CD8-positive, alpha-beta memory T cell (primary cell): ENCODE measurements at regions of chr2 and their contacts with region 1.

Region 1: GRCh38 chr2:195656859-195657633 is at the start of gene SLC39A10:
- DNase-seq: peak; percentile 92 to 98 (median 97)
- H3K4me3 ChIP-seq: peak within 1 kb of the TSS; percentile 81
- H3K4me3 Mint-ChIP-seq: peak within 1 kb of the TSS; percentile 95 to 100 (median 99)
- H3K27ac ChIP-seq: peak within 1 kb of the TSS; percentile 98
- H3K27ac Mint-ChIP-seq: peak within 1 kb of the TSS; percentile 96 to 100 (median 99)
- H3K4me1 ChIP-seq: peaks cover 17% of the 10 kb centered on the region
- H3K4me1 Mint-ChIP-seq: peaks cover 38 to 45% (median 43%) of the 10 kb centered on the region in 3 donors
- H3K27me3 ChIP-seq: no peaks in the 10 kb centered on the region
- H3K27me3 Mint-ChIP-seq: peaks cover 0 to 9% of the 10 kb centered on the region in 2 donors
- total RNA-seq, gene SLC39A10: 22.2 to 23.6 TPM

Region 2: GRCh38 chr2:195488567-195488966 is 168.5 kb before region 1 on chr2:
- CTCF ChIA-PET with region 1: interaction called, 24 read pairs
- POLR2A ChIA-PET with region 1: no interaction called
- DNase-seq: no peak
- H3K4me3 ChIP-seq: no peak overlapping the region
- H3K4me3 Mint-ChIP-seq: no peak overlapping the region
- H3K27ac ChIP-seq: no peak overlapping the region
- H3K27ac Mint-ChIP-seq: no peak overlapping the region
- H3K4me1 ChIP-seq: peaks cover 13% of the 10 kb centered on the region
- H3K4me1 Mint-ChIP-seq: peaks cover 18 to 35% (median 20%) of the 10 kb centered on the region in 3 donors
- H3K27me3 ChIP-seq: no peaks in the 10 kb centered on the region
- H3K27me3 Mint-ChIP-seq: peaks cover 0 to 1% of the 10 kb centered on the region in 2 donors

Region 3: DNA sequence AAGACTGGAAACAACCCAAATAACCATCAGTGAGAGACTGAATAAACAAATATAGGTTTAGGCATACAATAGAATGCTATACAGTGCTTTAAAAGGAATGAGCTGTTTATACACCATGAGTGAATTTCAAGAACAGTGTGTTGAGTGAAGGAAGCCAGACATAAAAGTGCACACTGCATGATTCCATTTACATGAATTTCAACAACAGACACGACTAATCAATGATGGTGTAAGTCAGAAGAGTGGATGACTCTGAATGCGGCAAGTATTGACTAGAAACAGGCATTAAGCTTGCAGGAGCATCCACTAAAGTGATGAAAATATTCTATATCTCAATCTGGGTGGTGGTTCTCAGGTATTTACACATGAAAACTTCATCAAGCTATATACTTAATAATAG is 142.7 kb before region 1 on chr2:
- CTCF ChIA-PET with region 1: interaction called, 11 read pairs
- POLR2A ChIA-PET with region 1: no interaction called
- DNase-seq: no peak
- H3K4me3 ChIP-seq: no peak overlapping the region
- H3K4me3 Mint-ChIP-seq: no peak overlapping the region
- H3K27ac ChIP-seq: no peak overlapping the region
- H3K27ac Mint-ChIP-seq: no peak overlapping the region
- H3K4me1 ChIP-seq: no peaks in the 10 kb centered on the region
- H3K4me1 Mint-ChIP-seq: peaks cover 3 to 18% (median 8%) of the 10 kb centered on the region in 3 donors
- H3K27me3 ChIP-seq: no peaks in the 10 kb centered on the region
- H3K27me3 Mint-ChIP-seq: no peaks in the 10 kb centered on the region

Region 4: DNA sequence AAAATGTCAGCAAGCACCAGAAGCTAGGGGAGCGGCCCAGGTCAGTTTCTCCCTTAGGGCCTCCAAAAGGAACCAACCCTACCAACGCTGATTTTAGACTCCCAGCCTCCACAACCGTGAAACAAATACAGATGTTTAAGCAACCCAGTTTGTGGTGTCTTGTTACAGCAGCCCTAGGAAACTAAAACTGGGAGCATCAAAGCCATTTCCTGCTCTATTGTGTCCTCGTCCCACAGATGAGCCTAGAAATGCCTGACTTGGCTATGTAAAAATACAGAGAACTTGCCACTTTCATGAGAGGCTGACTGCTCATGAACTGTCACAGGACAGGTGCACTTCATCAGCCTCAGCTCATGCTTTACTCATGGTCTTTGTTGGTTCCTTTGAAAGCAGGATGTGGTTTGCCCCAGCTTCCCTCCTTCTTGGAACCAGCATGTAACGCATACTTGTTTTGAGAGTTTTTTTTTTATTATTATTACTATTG is 97.6 kb before region 1 on chr2:
- CTCF ChIA-PET with region 1: interaction called, 17 read pairs
- POLR2A ChIA-PET with region 1: interaction called, 30 read pairs
- DNase-seq: peak; percentile 46 to 87 (median 84)
- H3K4me3 ChIP-seq: no peak overlapping the region
- H3K4me3 Mint-ChIP-seq: peak overlapping the region; percentile 38 to 84 (median 73)
- H3K27ac ChIP-seq: peak overlapping the region; percentile 15
- H3K27ac Mint-ChIP-seq: peak overlapping the region; percentile 69 to 97 (median 94)
- H3K4me1 ChIP-seq: peaks cover 77% of the 10 kb centered on the region
- H3K4me1 Mint-ChIP-seq: peaks cover 62 to 79% (median 78%) of the 10 kb centered on the region in 3 donors
- H3K27me3 ChIP-seq: no peaks in the 10 kb centered on the region
- H3K27me3 Mint-ChIP-seq: no peaks in the 10 kb centered on the region

Region 5: GRCh38 chr2:195838002-195838401 is 181.0 kb after region 1 on chr2:
- CTCF ChIA-PET with region 1: no interaction called
- POLR2A ChIA-PET with region 1: no interaction called
- DNase-seq: no peak
- H3K4me3 ChIP-seq: no peak overlapping the region
- H3K4me3 Mint-ChIP-seq: no peak overlapping the region
- H3K27ac ChIP-seq: no peak overlapping the region
- H3K27ac Mint-ChIP-seq: no peak overlapping the region
- H3K4me1 ChIP-seq: no peaks in the 10 kb centered on the region
- H3K4me1 Mint-ChIP-seq: peaks cover 8 to 14% (median 11%) of the 10 kb centered on the region in 3 donors
- H3K27me3 ChIP-seq: no peaks in the 10 kb centered on the region
- H3K27me3 Mint-ChIP-seq: peaks cover 0 to 8% of the 10 kb centered on the region in 2 donors

Region 6: GRCh38 chr2:196068271-196069209 is 411.5 kb after region 1 on chr2 and contains the start of gene DNAH7:
- CTCF ChIA-PET with region 1: interaction called, 20 read pairs
- POLR2A ChIA-PET with region 1: interaction called, 7 read pairs
- DNase-seq: peak; percentile 83 to 96 (median 93)
- H3K4me3 ChIP-seq: peak within 1 kb of the TSS; percentile 56
- H3K4me3 Mint-ChIP-seq: peak within 1 kb of the TSS; percentile 70 to 90 (median 81)
- H3K27ac ChIP-seq: peak within 1 kb of the TSS; percentile 48
- H3K27ac Mint-ChIP-seq: peak within 1 kb of the TSS; percentile 66 to 88 (median 81)
- H3K4me1 ChIP-seq: peaks cover 16% of the 10 kb centered on the region
- H3K4me1 Mint-ChIP-seq: peaks cover 9 to 18% (median 16%) of the 10 kb centered on the region in 3 donors
- H3K27me3 ChIP-seq: no peaks in the 10 kb centered on the region
- H3K27me3 Mint-ChIP-seq: peaks cover 2 to 9% of the 10 kb centered on the region in 2 donors
- total RNA-seq, gene DNAH7: not detected